Activated CD4-positive, alpha-beta T cell treated with anti-CD3 and anti-CD28 coated beads, Interleukin-2, amount 10 ng/mL, durations not matched to agents 24 days and 14 days (primary cell): ENCODE measurements at regions of chr11 and their contacts with region 1.

Region 1: GRCh38 chr11:65662799-65663638 is at the start of gene RELA:
- DNase-seq: peak; percentile 97
- H3K4me3 Mint-ChIP-seq: peak within 1 kb of the TSS; percentile 92
- H3K27ac Mint-ChIP-seq: peak within 1 kb of the TSS; percentile 93
- H3K4me1 Mint-ChIP-seq: peaks cover 24% of the 10 kb centered on the region
- H3K27me3 Mint-ChIP-seq: no peaks in the 10 kb centered on the region
- total RNA-seq, gene RELA: 95.7 and 98.2 TPM in 2 replicates

Region 2: GRCh38 chr11:65524741-65525545 is 138.1 kb before region 1 on chr11 and contains the start of gene SCYL1:
- intact Hi-C with region 1: no loop called
- DNase-seq: peak; percentile 91
- H3K4me3 Mint-ChIP-seq: peak within 1 kb of the TSS; percentile 91
- H3K27ac Mint-ChIP-seq: peak within 1 kb of the TSS; percentile 93
- H3K4me1 Mint-ChIP-seq: peaks cover 52% of the 10 kb centered on the region
- H3K27me3 Mint-ChIP-seq: no peaks in the 10 kb centered on the region
- total RNA-seq, gene SCYL1: 94.2 and 95.8 TPM in 2 replicates

Region 3: GRCh38 chr11:65652511-65653231 is 10.3 kb before region 1 on chr11:
- intact Hi-C with region 1: loop called (anchors 1 kb)
- DNase-seq: peak; percentile 99
- H3K4me3 Mint-ChIP-seq: peak overlapping the region; percentile 86
- H3K27ac Mint-ChIP-seq: peak overlapping the region; percentile 94
- H3K4me1 Mint-ChIP-seq: peaks cover 33% of the 10 kb centered on the region
- H3K27me3 Mint-ChIP-seq: no peaks in the 10 kb centered on the region

Region 4: DNA sequence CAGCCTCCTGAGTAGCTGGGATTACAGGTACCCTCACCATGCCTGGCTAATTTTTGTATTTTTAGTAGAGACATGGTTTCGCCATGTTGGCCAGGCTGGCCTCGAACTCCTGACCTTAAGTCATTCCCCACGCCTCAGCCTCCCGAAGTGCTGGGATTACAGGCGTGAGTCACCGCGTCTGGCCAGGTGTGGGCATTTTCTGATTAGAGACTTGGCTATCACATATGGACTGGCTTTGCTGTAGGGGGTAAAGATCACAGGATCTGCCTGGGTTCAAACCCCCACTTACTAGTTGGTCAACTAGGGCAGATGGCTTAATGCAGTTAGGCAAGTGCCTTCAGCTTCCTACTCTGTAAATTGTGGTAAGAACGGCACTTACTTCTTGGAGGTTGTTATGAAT is 647.3 kb after region 1 on chr11:
- intact Hi-C with region 1: no loop called
- DNase-seq: no peak
- H3K4me3 Mint-ChIP-seq: no peak overlapping the region
- H3K27ac Mint-ChIP-seq: no peak overlapping the region
- H3K4me1 Mint-ChIP-seq: peaks cover 17% of the 10 kb centered on the region
- H3K27me3 Mint-ChIP-seq: peaks cover 6% of the 10 kb centered on the region